PC-3 (cell line): ENCODE measurements at regions of chr3 and their contacts with region 1.

Region 1: DNA sequence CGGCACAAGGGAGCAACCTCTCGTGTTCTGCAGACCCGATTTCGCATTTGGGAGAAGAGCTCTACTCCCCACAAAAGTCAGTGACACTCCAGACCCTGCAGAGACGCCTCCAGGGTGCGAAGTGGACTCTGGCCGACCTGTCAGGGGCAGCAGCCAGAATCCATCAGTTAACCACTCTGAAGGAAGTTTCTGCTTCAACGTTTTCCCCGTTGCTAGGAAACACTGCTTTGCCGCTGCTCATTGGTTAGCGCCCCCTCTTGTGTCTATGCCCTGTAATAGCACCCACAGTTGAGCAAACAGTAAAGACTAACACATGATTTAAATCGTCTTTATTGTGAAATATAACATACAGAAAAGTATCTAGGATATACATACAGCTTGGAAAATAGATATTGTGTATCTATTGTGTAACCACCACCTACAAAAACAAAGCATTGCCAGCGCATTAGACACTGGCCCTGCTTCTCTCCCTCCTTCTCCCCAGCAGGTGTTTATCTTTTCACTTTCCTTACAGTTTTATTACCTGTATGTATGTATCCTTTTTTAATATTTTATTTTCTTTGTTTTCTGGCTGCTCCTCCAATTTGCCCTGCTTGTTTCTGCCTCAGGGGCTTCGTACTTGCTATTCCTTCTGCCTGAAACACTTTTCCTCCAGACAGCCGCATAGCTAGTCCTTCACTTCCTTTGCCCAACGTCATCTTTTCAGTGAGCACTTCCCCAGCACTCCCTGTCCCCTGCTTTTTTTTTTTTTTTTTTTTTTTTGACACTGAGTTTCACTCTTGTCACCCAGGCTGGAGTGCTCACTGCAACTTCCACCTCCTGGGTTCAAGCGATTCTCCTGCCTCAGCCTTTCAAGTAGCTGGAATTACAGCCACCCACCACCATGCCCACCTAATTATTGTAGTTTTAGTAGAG is 38.8 kb downstream of the TMEM40 start:
- DNase-seq: peak; percentile 90
- ATAC-seq: peak; percentile 95
- H3K4me3 ChIP-seq: peak overlapping the region; percentile 55
- H3K27ac ChIP-seq: no peak overlapping the region
- H3K4me1 ChIP-seq: no peaks in the 10 kb centered on the region; the same call in 1 of the 2 replicates
- H3K27me3 ChIP-seq: no peaks in the 10 kb centered on the region
- CTCF ChIP-seq: peak; percentile 95

Region 2: GRCh38 chr3:12518261-12519028 is 201.8 kb before region 1 on chr3:
- CTCF ChIA-PET with region 1: no interaction called
- POLR2A ChIA-PET with region 1: no interaction called
- intact Hi-C with region 1: no loop called
- DNase-seq: no peak
- ATAC-seq: no peak
- H3K4me3 ChIP-seq: no peak overlapping the region
- H3K27ac ChIP-seq: no peak overlapping the region
- H3K4me1 ChIP-seq: no peaks in the 10 kb centered on the region
- H3K27me3 ChIP-seq: no peaks in the 10 kb centered on the region
- CTCF ChIP-seq: no peak

Region 3: GRCh38 chr3:12601072-12601471 is 119.2 kb before region 1 on chr3:
- CTCF ChIA-PET with region 1: no interaction called
- POLR2A ChIA-PET with region 1: no interaction called
- intact Hi-C with region 1: loop called (anchors 2 kb)
- DNase-seq: peak; percentile 28
- ATAC-seq: peak; percentile 68
- H3K4me3 ChIP-seq: no peak overlapping the region
- H3K27ac ChIP-seq: no peak overlapping the region
- H3K4me1 ChIP-seq: no peaks in the 10 kb centered on the region
- H3K27me3 ChIP-seq: no peaks in the 10 kb centered on the region
- CTCF ChIP-seq: peak; percentile 52

Region 4: DNA sequence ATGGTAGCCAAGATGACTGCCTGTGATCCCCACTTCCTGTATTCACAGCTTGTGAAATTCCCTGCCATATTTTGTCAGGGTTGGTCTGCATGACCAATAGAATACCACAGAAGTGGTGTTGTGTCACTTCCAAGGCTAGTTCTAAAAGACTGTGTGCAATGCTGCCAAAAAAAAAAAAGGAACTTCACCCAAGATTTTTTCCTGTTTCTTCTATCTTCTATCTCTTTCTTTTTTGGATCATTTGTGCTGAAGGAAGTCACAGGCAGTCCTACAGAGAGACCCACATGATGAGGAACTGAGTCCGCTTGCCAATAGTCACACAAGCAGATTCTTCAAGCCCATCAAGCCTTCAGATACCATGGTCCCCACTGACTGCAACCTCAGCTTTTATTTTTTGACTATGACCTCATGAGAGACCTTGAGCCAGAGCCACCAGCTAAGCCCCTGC is 38.3 kb before region 1 on chr3:
- CTCF ChIA-PET with region 1: no interaction called
- POLR2A ChIA-PET with region 1: no interaction called
- intact Hi-C with region 1: no loop called
- DNase-seq: peak; percentile 25
- ATAC-seq: no peak
- H3K4me3 ChIP-seq: no peak overlapping the region
- H3K27ac ChIP-seq: no peak overlapping the region
- H3K4me1 ChIP-seq: peaks cover 5% of the 10 kb centered on the region
- H3K27me3 ChIP-seq: no peaks in the 10 kb centered on the region
- CTCF ChIP-seq: no peak

Region 5: GRCh38 chr3:12706504-12707253 is 13.6 kb before region 1 on chr3:
- CTCF ChIA-PET with region 1: interaction called, 7 read pairs
- POLR2A ChIA-PET with region 1: no interaction called
- intact Hi-C with region 1: loop called (anchors 1 kb)
- DNase-seq: peak; percentile 92
- ATAC-seq: peak; percentile 94
- H3K4me3 ChIP-seq: no peak overlapping the region
- H3K27ac ChIP-seq: no peak overlapping the region
- H3K4me1 ChIP-seq: peaks cover 18% of the 10 kb centered on the region
- H3K27me3 ChIP-seq: no peaks in the 10 kb centered on the region
- CTCF ChIP-seq: peak; percentile 96

Region 6: GRCh38 chr3:12782172-12782815 is 62.1 kb after region 1 on chr3:
- CTCF ChIA-PET with region 1: no interaction called
- POLR2A ChIA-PET with region 1: no interaction called
- intact Hi-C with region 1: loop called (anchors 5 kb)
- DNase-seq: no peak
- ATAC-seq: no peak
- H3K4me3 ChIP-seq: no peak overlapping the region
- H3K27ac ChIP-seq: no peak overlapping the region
- H3K4me1 ChIP-seq: no peaks in the 10 kb centered on the region
- H3K27me3 ChIP-seq: no peaks in the 10 kb centered on the region
- CTCF ChIP-seq: no peak

Region 7: GRCh38 chr3:12830785-12831156 is 110.5 kb after region 1 on chr3:
- CTCF ChIA-PET with region 1: no interaction called
- POLR2A ChIA-PET with region 1: no interaction called
- intact Hi-C with region 1: loop called (anchors 5 kb)
- DNase-seq: peak; percentile 34
- ATAC-seq: peak; percentile 0; the same call in 1 of the 2 replicates
- H3K4me3 ChIP-seq: peak overlapping the region; percentile 25; the same call in 1 of the 2 replicates
- H3K27ac ChIP-seq: peak overlapping the region; percentile 94
- H3K4me1 ChIP-seq: peaks cover 42% of the 10 kb centered on the region
- H3K27me3 ChIP-seq: no peaks in the 10 kb centered on the region
- CTCF ChIP-seq: 0 out of 2 replicates have a peak, but pooled peaks have one; percentile 18

Region 8: DNA sequence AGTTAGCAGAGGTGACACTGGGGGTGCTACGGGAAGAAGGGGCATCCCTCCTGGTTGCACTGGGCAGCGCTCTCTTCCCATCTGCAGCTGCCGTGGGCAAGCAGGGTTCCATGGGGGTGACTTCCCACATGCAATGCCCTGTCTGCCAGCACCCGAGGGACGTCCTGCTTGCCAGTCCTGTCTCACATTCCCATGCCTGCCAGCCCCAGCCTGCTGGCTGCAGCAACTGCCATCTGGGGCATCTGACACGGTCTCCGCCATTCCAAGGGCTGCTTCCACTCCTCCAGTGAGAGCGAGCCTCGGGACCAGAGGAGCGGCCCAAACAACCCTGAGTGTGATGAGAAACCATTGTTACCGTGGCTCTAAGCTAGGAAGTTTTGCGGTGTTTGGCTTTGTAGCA is 166.5 kb after region 1 on chr3:
- CTCF ChIA-PET with region 1: no interaction called
- POLR2A ChIA-PET with region 1: interaction called, 19 read pairs
- intact Hi-C with region 1: no loop called
- DNase-seq: no peak
- ATAC-seq: no peak
- H3K4me3 ChIP-seq: no peak overlapping the region
- H3K27ac ChIP-seq: no peak overlapping the region
- H3K4me1 ChIP-seq: peaks cover 14% of the 10 kb centered on the region
- H3K27me3 ChIP-seq: no peaks in the 10 kb centered on the region
- CTCF ChIP-seq: no peak